ENCODE measurements at regions of chr17 and their contacts with region 1.

Region 1: GRCh38 chr17:28576758-28577465 is at the start of gene ALDOC:
- DNase-seq: peak; percentile 97 to 99
- H3K4me3 ChIP-seq: peak within 1 kb of the TSS; percentile 12 to 54 (median 20); a peak in 5 of 8 replicates
- H3K27ac ChIP-seq: no peak within 1 kb of the TSS
- H3K4me1 ChIP-seq: peaks cover 2 to 9% (median 5%) of the 10 kb centered on the region in 4 experiments; a peak in 6 of 7 replicates
- H3K27me3 ChIP-seq: peaks cover 0 to 8% (median 4%) of the 10 kb centered on the region in 4 experiments; a peak in 4 of 7 replicates
- CTCF ChIP-seq: no peak
- EP300 ChIP-seq: no peak
- POLR2A ChIP-seq: peak; percentile 80 to 84
- RAD21 ChIP-seq: no peak
- total RNA-seq, gene ALDOC: 51.3 and 51.6 TPM in 2 replicates

Region 2: GRCh38 chr17:28509789-28510188 is 67.1 kb before region 1 on chr17:
- CTCF ChIA-PET with region 1: no interaction called
- POLR2A ChIA-PET with region 1: no interaction called
- DNase-seq: no peak
- H3K4me3 ChIP-seq: no peak overlapping the region
- H3K27ac ChIP-seq: no peak overlapping the region
- H3K4me1 ChIP-seq: peaks cover 0 to 17% (median 7%) of the 10 kb centered on the region in 4 experiments; a peak in 6 of 7 replicates
- H3K27me3 ChIP-seq: peaks cover 0 to 8% (median 4%) of the 10 kb centered on the region in 4 experiments; a peak in 4 of 7 replicates
- CTCF ChIP-seq: no peak
- EP300 ChIP-seq: no peak
- POLR2A ChIP-seq: no peak
- RAD21 ChIP-seq: no peak

Region 3: GRCh38 chr17:28592260-28592659 is 15.3 kb after region 1 on chr17:
- CTCF ChIA-PET with region 1: interaction called, 6 read pairs
- POLR2A ChIA-PET with region 1: interaction called, 20 read pairs
- DNase-seq: no peak
- H3K4me3 ChIP-seq: no peak overlapping the region
- H3K27ac ChIP-seq: no peak overlapping the region
- H3K4me1 ChIP-seq: no peaks in the 10 kb centered on the region
- H3K27me3 ChIP-seq: no peaks in the 10 kb centered on the region
- CTCF ChIP-seq: no peak
- EP300 ChIP-seq: no peak
- POLR2A ChIP-seq: no peak
- RAD21 ChIP-seq: no peak

Region 4: DNA sequence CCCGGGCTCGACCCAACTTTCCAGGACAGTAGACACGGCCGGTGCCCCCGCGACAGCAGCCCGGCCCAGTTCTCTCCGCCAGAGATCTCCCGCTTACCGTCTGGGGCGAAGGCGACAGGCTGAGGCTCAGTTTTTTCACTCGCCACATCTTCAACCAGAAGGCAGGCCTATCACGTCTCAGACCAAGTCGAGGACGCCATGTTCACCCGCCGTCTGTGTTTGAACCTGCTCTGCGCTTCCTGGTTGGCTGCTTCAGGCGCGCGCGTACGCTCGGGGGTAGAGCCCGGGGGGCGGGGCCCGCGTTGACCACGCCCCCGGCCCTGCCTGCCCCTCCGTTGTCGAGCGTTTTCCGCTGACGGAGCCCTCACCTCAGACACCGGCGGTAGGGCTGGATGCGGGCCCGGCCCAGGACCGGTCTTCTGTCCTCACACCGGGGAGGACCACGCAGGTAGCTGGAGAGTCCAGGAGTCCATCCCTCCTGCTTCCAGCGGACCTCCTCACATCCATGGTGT is 21.9 kb after region 1 on chr17 and contains the start of gene SPAG5:
- CTCF ChIA-PET with region 1: interaction called, 5 read pairs
- POLR2A ChIA-PET with region 1: interaction called, 14 read pairs
- DNase-seq: peak; percentile 81 to 96
- H3K4me3 ChIP-seq: peak within 1 kb of the TSS; percentile 78 to 93 (median 92)
- H3K27ac ChIP-seq: peak within 1 kb of the TSS; percentile 93
- H3K4me1 ChIP-seq: peaks cover 0 to 4% (median 0%) of the 10 kb centered on the region in 4 experiments; a peak in 2 of 7 replicates
- H3K27me3 ChIP-seq: no peaks in the 10 kb centered on the region; a peak in 1 of 7 replicates
- CTCF ChIP-seq: 0 out of 4 replicates have a peak, but pooled peaks of 1 of the 3 experiments have one; percentile 17
- EP300 ChIP-seq: no peak
- POLR2A ChIP-seq: peak; percentile 86 to 92
- RAD21 ChIP-seq: no peak
- total RNA-seq, gene SPAG5: 115 and 129 TPM in 2 replicates

Region 5: DNA sequence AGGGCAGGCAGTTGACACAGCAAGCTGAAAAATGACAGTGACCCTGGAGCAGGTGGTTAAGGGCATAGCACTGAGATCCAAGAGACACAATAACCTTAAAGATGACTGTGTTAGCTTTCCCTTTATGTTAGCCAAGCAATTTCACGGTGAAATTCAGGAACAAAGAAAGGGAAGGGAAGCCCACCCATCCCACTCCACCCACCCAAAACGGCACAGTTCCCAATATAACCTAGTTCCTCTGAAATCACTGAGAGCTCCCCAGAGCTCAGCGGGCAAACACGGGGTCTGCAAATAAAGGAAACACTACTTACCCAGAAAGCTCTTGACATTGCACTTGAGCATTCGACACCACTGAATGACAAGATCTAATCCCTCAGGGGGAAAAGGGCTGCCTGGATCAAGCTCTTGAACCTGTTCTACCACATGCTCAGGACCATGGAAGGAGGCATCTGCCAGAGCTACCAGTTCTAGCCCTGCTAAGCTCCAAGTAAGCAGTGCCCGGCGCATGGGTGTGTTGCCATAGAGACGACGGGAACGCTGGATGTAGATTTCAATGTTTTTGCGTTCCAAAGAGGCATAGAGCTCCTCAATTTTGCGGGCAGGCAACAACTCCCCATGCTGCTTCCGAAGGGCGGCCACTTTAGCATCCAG is 57.4 kb after region 1 on chr17:
- CTCF ChIA-PET with region 1: no interaction called
- POLR2A ChIA-PET with region 1: interaction called, 10 read pairs
- DNase-seq: no peak
- H3K4me3 ChIP-seq: no peak overlapping the region
- H3K27ac ChIP-seq: no peak overlapping the region
- H3K4me1 ChIP-seq: no peaks in the 10 kb centered on the region
- H3K27me3 ChIP-seq: no peaks in the 10 kb centered on the region
- CTCF ChIP-seq: no peak
- EP300 ChIP-seq: no peak
- POLR2A ChIP-seq: no peak
- RAD21 ChIP-seq: no peak

Region 6: GRCh38 chr17:28701987-28702751 is 125.3 kb after region 1 on chr17:
- CTCF ChIA-PET with region 1: no interaction called
- POLR2A ChIA-PET with region 1: no interaction called
- DNase-seq: no peak
- H3K4me3 ChIP-seq: no peak overlapping the region
- H3K27ac ChIP-seq: 0 out of 2 replicates have a peak overlapping the region, but pooled peaks have one; percentile 19
- H3K4me1 ChIP-seq: peaks cover 0 to 11% (median 4%) of the 10 kb centered on the region in 4 experiments; a peak in 4 of 7 replicates
- H3K27me3 ChIP-seq: no peaks in the 10 kb centered on the region
- CTCF ChIP-seq: no peak
- EP300 ChIP-seq: no peak
- POLR2A ChIP-seq: peak in 1 of 2 experiments; percentile 45; a peak in 1 of 3 replicates
- RAD21 ChIP-seq: no peak

Measured in H1 (cell line).